ENCODE measurements at regions of chr10 and their contacts with region 1.

Region 1: GRCh38 chr10:60456053-60456452 is 66.4 kb upstream of the ANK3 start:
- DNase-seq: no peak
- H3K4me3 ChIP-seq: no peak overlapping the region
- H3K4me3 Mint-ChIP-seq: no peak overlapping the region
- H3K27ac ChIP-seq: no peak overlapping the region
- H3K27ac Mint-ChIP-seq: no peak overlapping the region
- H3K4me1 ChIP-seq: no peaks in the 10 kb centered on the region
- H3K4me1 Mint-ChIP-seq: peaks cover 4% of the 10 kb centered on the region
- H3K27me3 ChIP-seq: no peaks in the 10 kb centered on the region
- H3K27me3 Mint-ChIP-seq: no peaks in the 10 kb centered on the region
- CTCF ChIP-seq: no peak

Region 2: GRCh38 chr10:60629332-60629731 is 173.3 kb after region 1 on chr10:
- intact Hi-C with region 1: loop called in 1 of 2 experiments (anchors 10 kb)
- DNase-seq: no peak
- H3K4me3 ChIP-seq: no peak overlapping the region
- H3K4me3 Mint-ChIP-seq: no peak overlapping the region
- H3K27ac ChIP-seq: no peak overlapping the region
- H3K27ac Mint-ChIP-seq: no peak overlapping the region
- H3K4me1 ChIP-seq: no peaks in the 10 kb centered on the region
- H3K4me1 Mint-ChIP-seq: no peaks in the 10 kb centered on the region
- H3K27me3 ChIP-seq: no peaks in the 10 kb centered on the region
- H3K27me3 Mint-ChIP-seq: peaks cover 0 to 2% (median 0%) of the 10 kb centered on the region in 3 donors
- CTCF ChIP-seq: no peak

Measured in CD14-positive monocyte (primary cell).